CD4-positive, alpha-beta T cell (primary cell): ENCODE measurements at regions of chr7 and their contacts with region 1.

Region 1: DNA sequence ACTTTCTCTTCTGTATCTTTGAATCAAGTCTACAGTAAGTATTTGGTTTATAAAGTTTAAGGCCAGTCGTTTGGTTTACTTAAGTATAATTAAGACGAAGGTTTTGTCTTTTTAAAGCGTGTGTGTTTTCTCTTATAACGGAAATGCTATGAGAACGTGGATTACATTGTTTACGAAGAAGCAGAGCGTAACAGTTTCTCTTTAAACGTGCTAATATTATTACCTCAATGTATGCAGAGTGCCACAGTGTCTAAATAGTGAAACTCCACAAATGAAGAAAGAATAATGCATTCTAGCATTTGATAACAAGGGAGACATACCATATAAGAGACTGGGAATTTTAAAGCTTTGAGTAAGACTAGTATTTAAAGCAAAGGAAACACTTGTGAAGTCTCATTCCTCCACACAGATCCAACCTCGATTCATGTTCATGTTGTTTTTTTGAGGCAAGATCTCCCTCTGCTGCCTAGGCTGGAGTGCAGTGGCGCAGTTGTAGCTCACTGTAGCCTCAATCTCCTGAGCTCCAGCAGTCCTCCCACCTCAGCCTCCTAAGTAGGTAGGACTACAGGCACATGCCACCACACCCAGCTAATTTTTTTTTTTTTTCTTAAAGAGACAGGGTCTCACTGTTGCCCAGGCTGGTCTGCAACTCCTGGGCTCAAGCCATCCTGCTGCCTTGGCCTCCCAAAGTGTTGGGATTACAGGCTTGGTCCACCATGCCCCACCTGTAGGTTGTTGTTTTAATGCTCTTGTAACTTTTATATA is 75.1 kb downstream of the ANKRD61 start:
- DNase-seq: peak in 13 of 14 experiments; percentile 7 to 77 (median 25)
- ATAC-seq: peak; percentile 4
- H3K4me3 ChIP-seq: peak overlapping the region; percentile 88
- H3K4me3 Mint-ChIP-seq: peak overlapping the region; percentile 91
- H3K27ac ChIP-seq: peak overlapping the region; percentile 73
- H3K27ac Mint-ChIP-seq: peak overlapping the region; percentile 90
- H3K4me1 ChIP-seq: peaks cover 16% of the 10 kb centered on the region
- H3K4me1 Mint-ChIP-seq: peaks cover 33% of the 10 kb centered on the region
- H3K27me3 ChIP-seq: no peaks in the 10 kb centered on the region
- H3K27me3 Mint-ChIP-seq: no peaks in the 10 kb centered on the region
- CTCF ChIP-seq: peak; percentile 22

Region 2: GRCh38 chr7:5854738-5855137 is 251.6 kb before region 1 on chr7:
- CTCF ChIA-PET with region 1: interaction called, 4 read pairs
- POLR2A ChIA-PET with region 1: no interaction called
- intact Hi-C with region 1: loop called in 1 of 2 experiments (anchors 2 kb)
- DNase-seq: no peak
- ATAC-seq: no peak
- H3K4me3 ChIP-seq: no peak overlapping the region
- H3K4me3 Mint-ChIP-seq: no peak overlapping the region
- H3K27ac ChIP-seq: no peak overlapping the region
- H3K27ac Mint-ChIP-seq: no peak overlapping the region
- H3K4me1 ChIP-seq: peaks cover 28% of the 10 kb centered on the region
- H3K4me1 Mint-ChIP-seq: peaks cover 25% of the 10 kb centered on the region
- H3K27me3 ChIP-seq: no peaks in the 10 kb centered on the region
- H3K27me3 Mint-ChIP-seq: no peaks in the 10 kb centered on the region
- CTCF ChIP-seq: no peak